SK-N-SH (cell line): ENCODE measurements at regions of chr22 and their contacts with region 1.

Region 1: GRCh38 chr22:45577746-45578523 is 75.3 kb downstream of the FBLN1 start:
- DNase-seq: peak; percentile 85
- H3K4me3 ChIP-seq: peak overlapping the region in 1 of 2 experiments; percentile 38; a peak in 1 of 4 replicates
- H3K27ac ChIP-seq: no peak overlapping the region
- H3K4me1 ChIP-seq: no peaks in the 10 kb centered on the region; a peak in 1 of 4 replicates
- H3K27me3 ChIP-seq: no peaks in the 10 kb centered on the region
- CTCF ChIP-seq: peak; percentile 94
- EP300 ChIP-seq: no peak
- RAD21 ChIP-seq: peak; percentile 97

Region 2: DNA sequence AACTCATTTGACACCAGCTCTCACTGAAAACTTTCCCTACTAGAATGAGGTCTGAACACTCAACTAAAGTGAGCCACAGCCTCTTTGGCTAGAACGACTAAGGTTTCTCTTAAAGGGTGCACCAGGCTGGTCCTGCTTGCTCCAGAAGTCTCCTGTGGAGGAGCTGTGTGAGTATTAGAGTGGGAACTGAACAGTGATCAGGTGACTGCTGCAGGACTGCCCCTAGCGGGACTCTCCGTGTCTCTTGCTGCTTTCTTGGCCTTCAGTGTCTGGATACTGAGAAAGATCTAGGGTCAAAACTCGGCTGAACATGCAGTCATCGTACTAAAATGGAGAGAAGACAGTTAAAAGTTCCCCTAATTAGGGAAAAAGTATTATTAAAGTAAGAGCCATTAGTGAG is 233.6 kb before region 1 on chr22:
- CTCF ChIA-PET with region 1: no interaction called
- POLR2A ChIA-PET with region 1: no interaction called
- DNase-seq: no peak
- H3K4me3 ChIP-seq: no peak overlapping the region
- H3K27ac ChIP-seq: no peak overlapping the region
- H3K4me1 ChIP-seq: no peaks in the 10 kb centered on the region
- H3K27me3 ChIP-seq: no peaks in the 10 kb centered on the region
- CTCF ChIP-seq: no peak
- EP300 ChIP-seq: no peak
- RAD21 ChIP-seq: no peak

Region 3: GRCh38 chr22:45564349-45565032 is 13.4 kb before region 1 on chr22:
- CTCF ChIA-PET with region 1: interaction called, 24 read pairs
- POLR2A ChIA-PET with region 1: no interaction called
- DNase-seq: no peak
- H3K4me3 ChIP-seq: no peak overlapping the region
- H3K27ac ChIP-seq: no peak overlapping the region; a peak in 1 of 4 replicates
- H3K4me1 ChIP-seq: peaks cover 0 to 8% of the 10 kb centered on the region in 2 experiments; a peak in 1 of 4 replicates
- H3K27me3 ChIP-seq: no peaks in the 10 kb centered on the region
- CTCF ChIP-seq: no peak
- EP300 ChIP-seq: no peak
- RAD21 ChIP-seq: no peak

Region 4: GRCh38 chr22:45602824-45603630 is 25.1 kb after region 1 on chr22:
- CTCF ChIA-PET with region 1: interaction called, 33 read pairs
- POLR2A ChIA-PET with region 1: no interaction called
- DNase-seq: peak; percentile 91
- H3K4me3 ChIP-seq: peak overlapping the region in 1 of 2 experiments; percentile 28; a peak in 2 of 4 replicates
- H3K27ac ChIP-seq: peak overlapping the region; percentile 20 to 30; a peak in 1 of 4 replicates
- H3K4me1 ChIP-seq: peaks cover 22 to 26% of the 10 kb centered on the region in 2 experiments; a peak in 2 of 4 replicates
- H3K27me3 ChIP-seq: no peaks in the 10 kb centered on the region
- CTCF ChIP-seq: no peak
- EP300 ChIP-seq: no peak
- RAD21 ChIP-seq: no peak

Region 5: DNA sequence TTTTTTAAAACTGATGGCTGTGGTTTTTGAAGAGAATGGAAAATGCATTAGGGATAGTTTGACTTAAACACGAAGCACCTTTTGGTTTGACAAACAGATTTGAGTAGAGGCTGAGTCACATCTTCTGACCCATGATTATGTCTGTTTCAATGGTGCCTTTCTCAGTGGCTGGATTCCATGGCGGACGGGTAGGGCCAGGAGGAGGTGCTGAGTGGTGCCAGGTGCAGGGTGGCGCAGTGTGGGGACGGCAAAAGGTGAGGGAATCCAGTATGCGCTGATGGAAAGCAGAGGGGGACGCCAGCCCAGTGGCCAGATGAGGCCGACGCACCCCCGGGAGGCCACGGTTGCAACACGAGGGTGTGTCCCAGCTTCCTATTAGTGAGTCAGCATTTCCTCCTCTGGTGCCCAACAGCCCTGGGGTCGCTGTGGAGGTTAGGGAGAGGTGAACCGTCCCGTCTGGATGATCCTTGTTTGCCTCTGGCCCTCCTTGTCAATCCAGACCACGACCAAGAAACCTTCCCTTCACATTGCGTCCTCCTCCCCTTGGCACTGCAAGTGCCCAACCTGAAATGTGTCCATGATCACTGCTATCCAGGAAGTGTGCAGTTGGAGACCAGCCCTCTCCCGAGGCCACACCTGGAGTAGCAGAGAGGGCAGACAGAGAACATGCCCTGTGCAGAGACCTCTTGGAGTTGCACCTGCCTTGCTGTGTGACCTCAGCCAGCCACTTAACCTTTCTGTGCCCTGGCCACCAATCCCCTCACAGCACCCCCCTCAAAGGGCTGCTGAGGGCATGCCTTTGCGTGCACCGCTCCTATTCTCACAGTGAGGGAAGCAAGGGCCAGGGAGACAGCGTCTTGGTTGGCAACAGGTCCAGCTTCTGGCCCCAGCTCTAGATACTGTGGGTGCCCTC is 61.2 kb after region 1 on chr22:
- CTCF ChIA-PET with region 1: interaction called, 51 read pairs
- POLR2A ChIA-PET with region 1: no interaction called
- DNase-seq: no peak
- H3K4me3 ChIP-seq: no peak overlapping the region
- H3K27ac ChIP-seq: no peak overlapping the region
- H3K4me1 ChIP-seq: no peaks in the 10 kb centered on the region; a peak in 1 of 4 replicates
- H3K27me3 ChIP-seq: no peaks in the 10 kb centered on the region; the same call in 1 of the 2 replicates
- CTCF ChIP-seq: no peak
- EP300 ChIP-seq: no peak
- RAD21 ChIP-seq: no peak

Region 6: DNA sequence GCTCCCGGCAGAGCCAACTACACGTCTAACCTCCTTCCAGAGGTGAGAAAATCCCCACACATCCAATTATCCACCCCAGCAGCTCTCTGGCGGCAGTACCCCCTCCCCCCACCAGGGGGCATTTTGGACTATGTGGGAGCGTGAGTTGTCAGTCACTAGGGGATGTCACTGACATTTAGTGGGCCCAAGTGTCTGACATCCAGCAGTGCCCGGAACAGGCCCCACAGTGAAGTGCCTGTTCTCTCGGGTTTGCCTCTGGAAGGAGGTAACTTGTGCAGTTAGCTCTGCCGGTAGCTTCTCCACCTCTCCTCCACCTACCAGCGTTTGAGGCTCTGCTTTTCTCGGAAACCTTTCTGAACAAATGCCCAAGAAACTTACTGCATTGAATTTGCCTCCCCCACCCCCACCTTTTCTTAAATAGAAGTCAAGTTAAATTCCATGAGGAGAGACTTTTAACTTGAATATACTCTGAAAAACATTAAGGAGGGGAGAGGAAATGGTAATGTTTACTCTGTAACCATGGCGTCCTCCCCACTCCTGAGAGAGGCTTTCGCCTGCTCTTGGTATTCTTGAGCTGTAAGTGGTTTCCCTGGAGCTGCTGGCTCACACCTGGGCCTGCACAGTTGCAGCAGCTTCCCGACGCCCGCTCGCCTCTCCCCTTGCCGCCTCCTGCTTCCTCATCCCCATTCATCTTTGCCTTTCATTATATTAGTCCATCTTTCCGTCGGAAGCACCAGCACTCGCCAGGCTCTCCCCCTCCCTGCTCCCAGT is 286.2 kb after region 1 on chr22:
- CTCF ChIA-PET with region 1: interaction called, 29 read pairs
- POLR2A ChIA-PET with region 1: no interaction called
- DNase-seq: peak; percentile 87
- H3K4me3 ChIP-seq: peak overlapping the region in 1 of 2 experiments; percentile 29; a peak in 1 of 4 replicates
- H3K27ac ChIP-seq: no peak overlapping the region
- H3K4me1 ChIP-seq: no peaks in the 10 kb centered on the region
- H3K27me3 ChIP-seq: no peaks in the 10 kb centered on the region
- CTCF ChIP-seq: peak; percentile 84
- EP300 ChIP-seq: no peak
- RAD21 ChIP-seq: peak; percentile 67

Region 7: DNA sequence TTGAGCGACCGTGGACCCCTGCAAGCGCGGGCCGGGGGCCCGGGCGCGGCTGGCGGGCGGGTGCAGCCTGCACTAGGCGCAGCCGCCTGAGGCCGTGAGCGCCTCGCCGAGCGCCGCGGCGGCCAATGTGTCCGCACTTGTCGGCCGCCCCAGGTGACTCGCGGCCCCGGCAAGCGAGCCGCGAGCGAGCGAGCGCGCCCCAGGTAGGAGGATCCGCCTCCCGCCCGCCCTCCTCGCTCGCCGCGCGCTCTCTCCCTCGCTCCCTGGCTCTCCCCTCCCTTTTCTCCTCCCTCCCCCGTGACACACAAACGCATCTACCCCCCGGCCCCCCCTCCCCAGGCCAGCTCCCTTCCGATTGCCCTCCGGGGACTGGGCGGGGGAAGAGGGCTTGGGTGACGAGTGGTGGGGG is 399.1 kb after region 1 on chr22 and contains the start of gene WNT7B:
- CTCF ChIA-PET with region 1: interaction called, 36 read pairs
- POLR2A ChIA-PET with region 1: no interaction called
- DNase-seq: peak; percentile 53
- H3K4me3 ChIP-seq: peak within 1 kb of the TSS; percentile 10 to 43; a peak in 3 of 4 replicates
- H3K27ac ChIP-seq: no peak within 1 kb of the TSS
- H3K4me1 ChIP-seq: peaks cover 0 to 4% of the 10 kb centered on the region in 2 experiments; a peak in 1 of 4 replicates
- H3K27me3 ChIP-seq: peaks cover 51% of the 10 kb centered on the region
- CTCF ChIP-seq: no peak
- EP300 ChIP-seq: no peak
- RAD21 ChIP-seq: no peak
- polyA plus RNA-seq, gene WNT7B: 0.13 TPM in 1 of 2 replicates, not detected in the other